GM10248 (cell line): ENCODE measurements at regions of chr1 and their contacts with region 1.

Region 1: DNA sequence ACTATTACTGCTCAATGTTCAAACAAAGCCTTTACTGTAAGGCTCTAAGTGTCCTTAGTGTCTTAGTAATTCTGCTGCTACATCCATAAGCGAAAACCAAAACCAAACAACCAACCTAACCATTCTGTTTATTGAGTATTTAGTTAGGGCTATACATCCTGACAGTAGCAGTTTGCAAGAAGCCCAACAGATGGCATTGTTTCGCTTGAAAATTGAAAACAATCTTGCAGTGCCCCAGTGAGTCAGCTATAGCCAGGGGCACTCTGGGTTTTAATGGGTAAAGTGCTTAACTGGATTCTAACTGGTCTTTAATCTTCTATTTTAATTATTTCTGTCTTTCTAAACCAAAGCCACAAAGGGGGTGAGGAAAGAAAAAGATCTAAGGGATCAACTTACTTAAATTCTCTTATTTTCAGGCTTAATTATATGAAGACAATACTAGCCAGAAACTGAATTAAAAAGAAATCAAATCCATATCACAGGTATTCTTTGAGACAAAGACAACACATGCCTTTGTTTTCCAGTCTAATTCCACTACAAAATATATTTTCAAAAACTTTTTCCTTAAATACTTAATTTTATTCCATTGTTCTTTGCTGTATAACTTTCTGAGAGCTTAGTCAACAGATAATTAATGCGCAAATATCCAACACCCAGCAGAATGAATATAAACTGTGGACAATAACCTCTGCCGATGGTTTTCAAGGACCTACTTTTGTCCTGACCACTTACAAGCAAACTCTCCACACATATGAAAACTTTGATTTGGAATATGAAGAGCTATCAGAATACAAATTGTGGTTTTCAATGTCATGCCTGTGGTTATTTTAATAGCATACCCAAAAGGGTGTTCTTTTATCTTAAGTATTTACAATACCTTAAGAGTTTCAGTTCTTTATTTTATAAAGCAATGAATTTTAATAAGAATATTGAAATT is 15.2 kb downstream of the POGZ start:
- DNase-seq: peak; percentile 76
- CTCF ChIP-seq: peak; percentile 60

Region 2: GRCh38 chr1:151472856-151473731 is 29.0 kb after region 1 on chr1:
- CTCF ChIA-PET with region 1: interaction called, 15 read pairs
- POLR2A ChIA-PET with region 1: no interaction called
- DNase-seq: peak; percentile 54
- CTCF ChIP-seq: no peak

Region 3: GRCh38 chr1:151520359-151520758 is 76.2 kb after region 1 on chr1:
- CTCF ChIA-PET with region 1: interaction called, 12 read pairs
- POLR2A ChIA-PET with region 1: no interaction called
- DNase-seq: no peak
- CTCF ChIP-seq: peak; percentile 31